ENCODE measurements at regions of chr17 and their contacts with region 1.

Region 1: GRCh38 chr17:35747540-35748017 is 5.5 kb downstream of the GAS2L2 start:
- DNase-seq: peak; percentile 68 to 89 (median 76)
- ATAC-seq: peak; percentile 99
- H3K4me3 ChIP-seq: no peak overlapping the region
- H3K4me3 Mint-ChIP-seq: no peak overlapping the region
- H3K27ac ChIP-seq: no peak overlapping the region
- H3K27ac Mint-ChIP-seq: no peak overlapping the region
- H3K4me1 ChIP-seq: peaks cover 16% of the 10 kb centered on the region
- H3K4me1 Mint-ChIP-seq: peaks cover 4% of the 10 kb centered on the region
- H3K27me3 ChIP-seq: peaks cover 38 to 50% of the 10 kb centered on the region in 2 experiments
- H3K27me3 Mint-ChIP-seq: peaks cover 64% of the 10 kb centered on the region
- CTCF ChIP-seq: peak; percentile 80

Region 2: GRCh38 chr17:34542700-34543336 is 1204.8 kb before region 1 on chr17:
- CTCF ChIA-PET with region 1: interaction called, 3 read pairs
- POLR2A ChIA-PET with region 1: no interaction called
- intact Hi-C with region 1: loop called in 1 of 2 experiments (anchors 5 kb)
- DNase-seq: peak; percentile 29 to 75 (median 50)
- ATAC-seq: no peak
- H3K4me3 ChIP-seq: no peak overlapping the region
- H3K4me3 Mint-ChIP-seq: no peak overlapping the region
- H3K27ac ChIP-seq: no peak overlapping the region
- H3K27ac Mint-ChIP-seq: no peak overlapping the region
- H3K4me1 ChIP-seq: no peaks in the 10 kb centered on the region
- H3K4me1 Mint-ChIP-seq: no peaks in the 10 kb centered on the region
- H3K27me3 ChIP-seq: peaks cover 0 to 4% of the 10 kb centered on the region in 2 experiments
- H3K27me3 Mint-ChIP-seq: peaks cover 59% of the 10 kb centered on the region
- CTCF ChIP-seq: peak; percentile 88

Region 3: GRCh38 chr17:35170968-35171771 is 576.4 kb before region 1 on chr17:
- CTCF ChIA-PET with region 1: no interaction called
- POLR2A ChIA-PET with region 1: no interaction called
- intact Hi-C with region 1: loop called (anchors 1 kb)
- DNase-seq: peak in 9 of 14 experiments; percentile 13 to 80 (median 42)
- ATAC-seq: peak; percentile 79
- H3K4me3 ChIP-seq: no peak overlapping the region
- H3K4me3 Mint-ChIP-seq: peak overlapping the region; percentile 80
- H3K27ac ChIP-seq: no peak overlapping the region
- H3K27ac Mint-ChIP-seq: peak overlapping the region; percentile 92
- H3K4me1 ChIP-seq: peaks cover 40% of the 10 kb centered on the region
- H3K4me1 Mint-ChIP-seq: peaks cover 52% of the 10 kb centered on the region
- H3K27me3 ChIP-seq: no peaks in the 10 kb centered on the region
- H3K27me3 Mint-ChIP-seq: no peaks in the 10 kb centered on the region
- CTCF ChIP-seq: peak; percentile 68

Region 4: DNA sequence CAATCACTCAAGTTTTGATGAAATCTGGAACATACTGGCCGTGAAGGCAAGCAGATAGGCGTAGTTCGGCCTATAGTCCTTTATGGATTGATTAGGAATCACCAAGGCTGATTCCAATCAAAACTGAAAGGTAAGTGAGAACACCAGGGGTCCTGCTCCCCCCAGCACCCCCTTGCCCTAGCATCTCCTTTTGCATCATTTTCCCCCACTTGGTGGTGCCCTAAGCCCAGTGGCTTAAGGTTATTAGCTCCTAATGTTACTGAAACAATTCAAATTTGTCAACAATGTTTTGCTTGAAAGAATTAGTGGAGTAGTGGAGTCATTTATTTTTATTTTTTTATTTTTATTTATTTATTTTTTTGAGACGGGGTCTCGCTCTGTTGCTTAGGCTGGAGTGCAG is 191.9 kb before region 1 on chr17:
- CTCF ChIA-PET with region 1: no interaction called
- POLR2A ChIA-PET with region 1: no interaction called
- intact Hi-C with region 1: loop called in 1 of 2 experiments (anchors 5 kb)
- DNase-seq: peak in 1 of 14 experiments; percentile 34
- ATAC-seq: no peak
- H3K4me3 ChIP-seq: no peak overlapping the region
- H3K4me3 Mint-ChIP-seq: no peak overlapping the region
- H3K27ac ChIP-seq: no peak overlapping the region
- H3K27ac Mint-ChIP-seq: no peak overlapping the region
- H3K4me1 ChIP-seq: no peaks in the 10 kb centered on the region
- H3K4me1 Mint-ChIP-seq: no peaks in the 10 kb centered on the region
- H3K27me3 ChIP-seq: peaks cover 0 to 5% of the 10 kb centered on the region in 2 experiments
- H3K27me3 Mint-ChIP-seq: peaks cover 8% of the 10 kb centered on the region
- CTCF ChIP-seq: no peak

Region 5: DNA sequence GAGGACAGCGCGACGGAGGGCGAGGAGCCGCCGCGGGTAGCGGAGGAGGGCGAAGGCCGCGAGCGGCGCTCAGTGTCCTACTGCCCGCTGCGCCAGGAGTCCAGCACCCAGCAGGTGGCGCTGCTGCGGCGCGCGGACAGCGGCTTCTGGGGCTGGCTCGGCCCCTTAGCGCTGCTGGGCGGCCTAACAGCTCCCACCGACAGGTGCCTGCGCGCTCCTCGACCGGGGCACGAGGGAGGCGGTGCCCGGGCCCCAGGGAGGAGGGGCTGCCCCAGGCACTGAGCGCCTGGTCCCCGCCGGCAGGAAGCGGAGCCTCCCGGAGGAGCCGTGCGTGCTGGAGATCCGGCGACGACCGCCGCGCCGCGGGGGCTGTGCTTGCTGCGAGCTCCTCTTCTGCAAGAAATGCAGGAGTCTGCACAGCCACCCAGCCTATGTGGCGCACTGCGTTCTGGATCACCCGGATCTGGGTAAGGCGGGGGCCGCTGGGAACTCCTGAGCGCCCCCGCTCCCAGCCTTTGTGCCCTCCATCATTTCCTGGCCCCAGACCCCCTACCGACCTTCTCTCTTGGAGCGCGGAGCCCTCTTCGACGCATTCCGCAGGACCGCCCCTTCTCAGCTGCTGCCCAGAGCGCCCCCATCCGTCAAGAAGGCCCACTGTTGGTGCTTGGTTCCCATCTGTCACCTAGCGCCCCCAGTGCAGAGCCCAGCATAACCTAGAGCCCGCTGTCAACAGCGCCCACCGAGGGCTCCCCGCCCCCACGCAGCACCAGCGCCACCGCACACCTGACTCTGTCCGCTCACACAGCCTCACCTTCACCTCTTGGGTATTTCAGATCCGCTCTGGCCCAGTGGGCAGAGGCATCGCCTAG is 16.8 kb after region 1 on chr17:
- CTCF ChIA-PET with region 1: interaction called, 12 read pairs
- POLR2A ChIA-PET with region 1: interaction called, 4 read pairs
- intact Hi-C with region 1: no loop called
- DNase-seq: peak; percentile 72 to 94 (median 84)
- ATAC-seq: peak; percentile 87
- H3K4me3 ChIP-seq: peak overlapping the region; percentile 79
- H3K4me3 Mint-ChIP-seq: peak overlapping the region; percentile 90
- H3K27ac ChIP-seq: peak overlapping the region; percentile 20 to 23
- H3K27ac Mint-ChIP-seq: peak overlapping the region; percentile 32
- H3K4me1 ChIP-seq: peaks cover 12% of the 10 kb centered on the region
- H3K4me1 Mint-ChIP-seq: peaks cover 7% of the 10 kb centered on the region
- H3K27me3 ChIP-seq: no peaks in the 10 kb centered on the region
- H3K27me3 Mint-ChIP-seq: no peaks in the 10 kb centered on the region
- CTCF ChIP-seq: peak; percentile 82

Region 6: DNA sequence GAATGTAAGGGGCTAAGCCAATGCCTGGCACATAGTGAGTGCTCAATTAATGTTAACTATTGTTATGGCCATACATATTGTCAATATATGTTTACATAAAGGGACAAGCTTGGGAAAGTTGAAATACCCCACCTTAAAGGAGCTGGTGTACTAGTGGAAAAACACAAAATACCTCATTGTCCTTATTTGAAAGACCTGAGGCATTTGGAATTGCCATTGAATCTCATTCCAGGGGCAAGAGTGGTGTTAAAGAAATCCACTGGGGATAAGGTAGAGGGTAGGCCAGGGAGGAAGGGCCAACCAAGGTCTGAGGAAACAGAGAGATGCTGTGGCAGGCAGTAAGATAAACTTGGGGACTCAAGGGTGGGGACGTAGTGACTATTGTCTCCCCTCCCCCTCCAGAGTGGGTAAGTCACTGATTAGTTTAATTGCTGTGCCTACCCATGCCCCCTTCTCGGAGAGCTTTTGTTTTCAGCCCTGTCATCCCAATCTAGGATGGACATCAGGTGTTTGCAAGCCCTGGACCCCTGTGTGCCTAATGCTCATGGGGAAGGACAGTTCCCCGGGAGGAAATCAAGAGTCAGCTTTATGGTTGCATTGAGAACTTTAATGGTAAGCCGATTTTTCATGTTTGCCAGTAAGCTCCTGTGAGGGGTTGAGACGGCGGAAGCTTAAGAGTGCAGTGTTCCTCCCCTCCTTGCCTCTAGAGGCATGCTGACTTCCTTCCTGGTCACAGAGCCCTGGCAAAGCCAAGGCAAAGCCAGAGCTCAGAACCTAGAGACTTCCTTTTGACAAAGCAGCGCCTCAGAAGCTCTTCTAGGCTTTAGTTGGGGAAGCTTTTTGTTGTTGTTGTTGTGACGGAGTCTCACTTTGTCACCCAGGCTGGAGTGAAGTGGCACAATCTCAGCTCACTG is 123.6 kb after region 1 on chr17:
- CTCF ChIA-PET with region 1: no interaction called
- POLR2A ChIA-PET with region 1: no interaction called
- intact Hi-C with region 1: no loop called
- DNase-seq: peak in 10 of 14 experiments; percentile 11 to 67 (median 32)
- ATAC-seq: peak; percentile 97
- H3K4me3 ChIP-seq: no peak overlapping the region
- H3K4me3 Mint-ChIP-seq: peak overlapping the region; percentile 9
- H3K27ac ChIP-seq: no peak overlapping the region
- H3K27ac Mint-ChIP-seq: no peak overlapping the region
- H3K4me1 ChIP-seq: peaks cover 24% of the 10 kb centered on the region
- H3K4me1 Mint-ChIP-seq: peaks cover 26% of the 10 kb centered on the region
- H3K27me3 ChIP-seq: no peaks in the 10 kb centered on the region
- H3K27me3 Mint-ChIP-seq: no peaks in the 10 kb centered on the region
- CTCF ChIP-seq: peak; percentile 22

Measured in CD4-positive, alpha-beta T cell (primary cell).